Naive thymus-derived CD4-positive, alpha-beta T cell (primary cell): ENCODE measurements at regions of chr2 and their contacts with region 1.

Region 1: DNA sequence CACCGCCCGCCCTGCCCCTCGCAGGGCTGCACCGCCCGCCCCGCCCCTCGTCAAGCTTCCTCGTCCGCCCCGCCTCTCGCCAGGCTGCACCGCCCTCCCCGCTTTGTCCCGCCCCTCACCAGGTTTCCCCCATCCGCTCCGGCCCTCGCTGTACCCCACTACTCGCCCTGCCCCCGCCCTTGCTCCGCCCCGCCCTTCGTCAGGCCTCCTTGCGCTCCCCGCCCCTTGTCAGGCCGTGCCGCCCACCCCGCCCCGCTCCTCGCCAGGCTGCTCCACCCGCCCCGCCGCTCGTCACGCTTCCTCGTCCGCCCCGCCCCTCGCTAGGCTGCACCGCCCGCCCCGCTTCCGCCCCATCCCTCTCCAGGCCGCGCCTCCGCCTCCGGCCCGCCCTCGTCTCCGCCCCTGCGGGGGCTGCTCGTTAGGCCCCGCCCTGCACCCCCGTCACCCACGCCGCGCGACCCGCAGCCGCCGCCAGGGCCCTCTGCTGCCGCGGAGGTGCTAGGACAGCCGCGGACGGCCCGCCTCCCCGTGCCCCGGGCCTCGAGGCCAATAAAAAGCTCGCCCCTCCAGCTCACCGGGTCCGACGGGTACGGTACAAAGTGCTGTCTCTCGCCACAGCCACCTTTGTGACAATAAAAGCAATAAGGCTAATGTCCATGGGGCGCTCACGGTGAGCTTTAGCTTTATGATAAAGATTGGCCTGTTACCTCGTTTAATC is 574 bp upstream of the DNPEP start:
- DNase-seq: peak; percentile 97 to 100 (median 98)
- ATAC-seq: peak; percentile 87
- H3K4me3 ChIP-seq: peak overlapping the region; percentile 38
- H3K4me3 Mint-ChIP-seq: peak overlapping the region; percentile 64 to 97 (median 90)
- H3K27ac ChIP-seq: peak overlapping the region; percentile 78
- H3K27ac Mint-ChIP-seq: peak overlapping the region; percentile 73 to 98 (median 91)
- H3K4me1 ChIP-seq: peaks cover 17 to 22% of the 10 kb centered on the region in 2 donors
- H3K4me1 Mint-ChIP-seq: peaks cover 2 to 37% (median 32%) of the 10 kb centered on the region in 7 donors
- H3K27me3 ChIP-seq: no peaks in the 10 kb centered on the region
- H3K27me3 Mint-ChIP-seq: peaks cover 0 to 11% (median 0%) of the 10 kb centered on the region in 5 donors

Region 2: GRCh38 chr2:218568190-218569037 is 819.9 kb before region 1 on chr2 and contains the starts of genes CNOT9 and USP37:
- CTCF ChIA-PET with region 1: no interaction called
- POLR2A ChIA-PET with region 1: no interaction called
- intact Hi-C with region 1: loop called in 1 of 2 experiments (anchors 1 kb)
- DNase-seq: peak; percentile 99 to 100 (median 100)
- ATAC-seq: peak; percentile 95
- H3K4me3 ChIP-seq: peak within 1 kb of the TSS; percentile 78
- H3K4me3 Mint-ChIP-seq: peak within 1 kb of the TSS; percentile 90 to 100 (median 98)
- H3K27ac ChIP-seq: peak within 1 kb of the TSS; percentile 96
- H3K27ac Mint-ChIP-seq: peak within 1 kb of the TSS; percentile 97 to 100 (median 99)
- H3K4me1 ChIP-seq: peaks cover 22 to 31% of the 10 kb centered on the region in 2 donors
- H3K4me1 Mint-ChIP-seq: peaks cover 45 to 73% (median 64%) of the 10 kb centered on the region in 7 donors
- H3K27me3 ChIP-seq: no peaks in the 10 kb centered on the region
- H3K27me3 Mint-ChIP-seq: no peaks in the 10 kb centered on the region
- total RNA-seq, gene CNOT9: 44.7 to 99.6 (median 53.8) TPM
- total RNA-seq, gene USP37: 16.6 to 36.3 (median 28.1) TPM

Region 3: GRCh38 chr2:218898109-218898878 is 490.0 kb before region 1 on chr2:
- CTCF ChIA-PET with region 1: no interaction called
- POLR2A ChIA-PET with region 1: no interaction called
- intact Hi-C with region 1: loop called in 1 of 2 experiments (anchors 5 kb)
- DNase-seq: peak; percentile 50 to 88 (median 72)
- ATAC-seq: peak; percentile 42
- H3K4me3 ChIP-seq: peak overlapping the region; percentile 65
- H3K4me3 Mint-ChIP-seq: peak overlapping the region; percentile 53 to 87 (median 82)
- H3K27ac ChIP-seq: no peak overlapping the region
- H3K27ac Mint-ChIP-seq: peak overlapping the region in 7 of 9 donors; percentile 33 to 92 (median 71)
- H3K4me1 ChIP-seq: peaks cover 40 to 49% of the 10 kb centered on the region in 2 donors
- H3K4me1 Mint-ChIP-seq: peaks cover 38 to 48% (median 42%) of the 10 kb centered on the region in 7 donors
- H3K27me3 ChIP-seq: peaks cover 0 to 3% of the 10 kb centered on the region in 2 donors
- H3K27me3 Mint-ChIP-seq: peaks cover 20 to 75% (median 40%) of the 10 kb centered on the region in 5 donors

Region 4: GRCh38 chr2:219229305-219230058 is 158.8 kb before region 1 on chr2 and contains the starts of genes ANKZF1 and ATG9A:
- CTCF ChIA-PET with region 1: no interaction called
- POLR2A ChIA-PET with region 1: interaction called, 4 read pairs
- intact Hi-C with region 1: loop called (anchors 1 to 5 kb)
- DNase-seq: peak; percentile 92 to 99 (median 99)
- ATAC-seq: peak; percentile 98
- H3K4me3 ChIP-seq: peak within 1 kb of the TSS; percentile 80
- H3K4me3 Mint-ChIP-seq: peak within 1 kb of the TSS; percentile 94 to 100 (median 98)
- H3K27ac ChIP-seq: peak within 1 kb of the TSS; percentile 90
- H3K27ac Mint-ChIP-seq: peak within 1 kb of the TSS; percentile 96 to 100 (median 96)
- H3K4me1 ChIP-seq: peaks cover 17 to 22% of the 10 kb centered on the region in 2 donors
- H3K4me1 Mint-ChIP-seq: peaks cover 33 to 83% (median 69%) of the 10 kb centered on the region in 7 donors
- H3K27me3 ChIP-seq: no peaks in the 10 kb centered on the region
- H3K27me3 Mint-ChIP-seq: no peaks in the 10 kb centered on the region
- total RNA-seq, gene ANKZF1: 117 to 287 (median 169) TPM
- total RNA-seq, gene ATG9A: 52.6 to 66.0 (median 60.9) TPM

Region 5: GRCh38 chr2:219352448-219353023 is 35.8 kb before region 1 on chr2:
- CTCF ChIA-PET with region 1: no interaction called
- POLR2A ChIA-PET with region 1: no interaction called
- intact Hi-C with region 1: loop called in 1 of 2 experiments (anchors 1 kb)
- DNase-seq: peak; percentile 25 to 66 (median 58)
- ATAC-seq: peak; percentile 87
- H3K4me3 ChIP-seq: no peak overlapping the region
- H3K4me3 Mint-ChIP-seq: no peak overlapping the region
- H3K27ac ChIP-seq: no peak overlapping the region
- H3K27ac Mint-ChIP-seq: no peak overlapping the region
- H3K4me1 ChIP-seq: no peaks in the 10 kb centered on the region
- H3K4me1 Mint-ChIP-seq: no peaks in the 10 kb centered on the region
- H3K27me3 ChIP-seq: no peaks in the 10 kb centered on the region
- H3K27me3 Mint-ChIP-seq: peaks cover 43 to 64% (median 48%) of the 10 kb centered on the region in 5 donors

Region 6: DNA sequence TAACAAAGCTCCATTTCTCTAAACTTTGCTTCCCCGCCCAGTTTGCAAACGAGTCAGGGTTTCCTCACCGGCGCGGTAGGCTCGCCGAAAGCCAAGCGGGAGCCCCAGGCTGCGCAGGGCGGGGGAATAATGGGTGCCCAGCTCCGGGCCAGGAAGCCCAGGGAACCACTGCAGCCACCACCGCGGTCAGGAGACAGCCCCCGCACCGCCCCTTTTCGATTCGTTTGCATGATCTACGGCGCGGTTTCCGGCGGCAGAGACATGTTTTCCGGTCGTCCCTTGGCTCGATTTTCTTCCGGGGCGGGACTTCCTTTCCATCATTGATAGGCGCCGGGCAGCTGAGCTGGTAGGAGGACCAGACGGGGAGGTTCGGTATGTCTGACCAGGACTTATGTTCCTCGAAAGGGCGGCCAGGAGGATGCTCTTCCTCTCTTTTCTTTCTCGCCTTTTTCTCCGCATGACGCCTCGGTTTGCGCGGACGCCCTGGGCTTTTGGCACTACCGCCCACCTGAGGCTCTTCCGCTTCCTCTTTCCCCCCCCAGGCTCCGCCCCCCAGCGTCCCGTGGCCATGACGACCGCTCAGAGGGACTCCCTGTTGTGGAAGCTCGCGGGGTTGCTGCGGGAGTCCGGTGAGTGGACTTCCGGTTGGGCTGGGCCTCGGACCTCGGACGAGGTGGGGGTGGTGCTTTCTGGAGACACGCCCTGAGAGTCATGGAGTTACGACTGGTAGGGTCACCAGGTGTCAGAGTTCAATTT is 209.4 kb after region 1 on chr2 and contains the start of gene STK11IP:
- CTCF ChIA-PET with region 1: no interaction called
- POLR2A ChIA-PET with region 1: no interaction called
- intact Hi-C with region 1: loop called (anchors 1 kb)
- DNase-seq: peak; percentile 76 to 91 (median 87)
- ATAC-seq: peak; percentile 91
- H3K4me3 ChIP-seq: peak within 1 kb of the TSS; percentile 86
- H3K4me3 Mint-ChIP-seq: peak within 1 kb of the TSS; percentile 89 to 99 (median 96)
- H3K27ac ChIP-seq: peak within 1 kb of the TSS; percentile 80
- H3K27ac Mint-ChIP-seq: peak within 1 kb of the TSS; percentile 93 to 98 (median 94)
- H3K4me1 ChIP-seq: peaks cover 5 to 15% of the 10 kb centered on the region in 2 donors
- H3K4me1 Mint-ChIP-seq: peaks cover 14 to 30% (median 21%) of the 10 kb centered on the region in 7 donors
- H3K27me3 ChIP-seq: no peaks in the 10 kb centered on the region
- H3K27me3 Mint-ChIP-seq: peaks cover 3 to 10% (median 6%) of the 10 kb centered on the region in 5 donors
- total RNA-seq, gene STK11IP: 33.6 to 46.4 (median 42.6) TPM